ENCODE measurements at regions of chr14 and their contacts with region 1.

Region 1: DNA sequence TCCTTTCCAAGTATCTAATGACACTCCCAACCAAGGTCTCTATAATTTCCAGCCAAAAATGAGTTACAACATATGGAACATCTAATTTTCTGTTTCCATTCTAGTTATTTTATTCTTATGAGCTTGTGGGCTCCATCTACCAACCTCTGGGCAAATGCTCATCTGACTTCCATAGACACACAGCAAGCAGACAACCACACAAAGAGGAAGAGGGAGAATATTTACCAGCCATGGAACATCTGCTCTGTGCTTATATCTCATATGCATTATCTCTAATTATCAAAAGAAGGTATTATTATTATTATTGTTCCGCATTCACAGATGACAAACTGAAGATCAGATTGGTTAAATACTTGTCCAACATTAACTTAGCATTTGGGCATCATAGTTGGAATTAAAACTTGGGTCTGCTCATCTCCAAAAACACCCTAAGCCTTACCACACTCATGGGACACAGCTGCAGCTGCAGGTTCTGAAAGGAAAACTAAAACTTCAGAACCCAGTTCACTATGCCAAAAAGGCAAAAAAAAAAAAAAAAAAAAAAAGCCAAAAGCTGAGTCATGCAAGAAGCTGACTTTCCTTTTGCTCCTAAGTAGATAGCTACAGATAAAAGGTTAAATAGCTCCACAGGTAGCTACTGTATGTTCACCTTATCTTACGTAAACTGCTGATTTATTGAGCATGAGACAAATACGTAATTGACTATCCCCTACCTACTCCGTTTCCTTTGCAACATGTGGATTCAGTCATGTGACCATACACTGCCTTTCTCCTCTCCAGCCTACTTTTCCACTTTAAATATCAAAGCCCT is 23.6 kb upstream of the TCL1B start:
- DNase-seq: peak; percentile 74
- ATAC-seq: peak; percentile 68
- H3K4me3 ChIP-seq: peak overlapping the region; percentile 64
- H3K27ac ChIP-seq: peak overlapping the region; percentile 82
- H3K4me1 ChIP-seq: peaks cover 56% of the 10 kb centered on the region
- H3K27me3 ChIP-seq: no peaks in the 10 kb centered on the region; a peak in 2 of 4 replicates
- CTCF ChIP-seq: no peak
- EP300 ChIP-seq: 0 out of 4 replicates have a peak, but pooled peaks of 1 of the 2 experiments have one; percentile 19
- POLR2A ChIP-seq: no peak
- RAD21 ChIP-seq: no peak

Region 2: GRCh38 chr14:93959239-93960107 is 1703.1 kb before region 1 on chr14:
- CTCF ChIA-PET with region 1: no interaction called
- POLR2A ChIA-PET with region 1: no interaction called
- RAD21 ChIA-PET with region 1: no interaction called
- SMC1A ChIA-PET with region 1: no interaction called
- in situ Hi-C with region 1: loop called (anchors 25 kb)
- intact Hi-C with region 1: no loop called
- DNase-seq: peak; percentile 90
- ATAC-seq: peak; percentile 82
- H3K4me3 ChIP-seq: peak overlapping the region; percentile 11; the same call in 1 of the 2 replicates
- H3K27ac ChIP-seq: peak overlapping the region; percentile 90
- H3K4me1 ChIP-seq: peaks cover 95% of the 10 kb centered on the region
- H3K27me3 ChIP-seq: no peaks in the 10 kb centered on the region
- CTCF ChIP-seq: no peak
- EP300 ChIP-seq: peak; percentile 98 to 99
- POLR2A ChIP-seq: peak; percentile 91
- RAD21 ChIP-seq: no peak

Region 3: GRCh38 chr14:95577067-95577800 is 85.3 kb before region 1 on chr14:
- CTCF ChIA-PET with region 1: interaction called, 3 read pairs
- POLR2A ChIA-PET with region 1: no interaction called
- RAD21 ChIA-PET with region 1: interaction called, 3 read pairs
- SMC1A ChIA-PET with region 1: interaction called, 5 read pairs
- in situ Hi-C with region 1: no loop called
- intact Hi-C with region 1: loop called (anchors 1 kb)
- DNase-seq: peak; percentile 89
- ATAC-seq: peak; percentile 98
- H3K4me3 ChIP-seq: peak overlapping the region; percentile 46; the same call in 1 of the 2 replicates
- H3K27ac ChIP-seq: peak overlapping the region; percentile 54
- H3K4me1 ChIP-seq: peaks cover 27% of the 10 kb centered on the region
- H3K27me3 ChIP-seq: peaks cover 0 to 5% of the 10 kb centered on the region in 2 experiments; a peak in 3 of 4 replicates
- CTCF ChIP-seq: no peak
- EP300 ChIP-seq: peak; percentile 74 to 83
- POLR2A ChIP-seq: no peak
- RAD21 ChIP-seq: no peak

Region 4: DNA sequence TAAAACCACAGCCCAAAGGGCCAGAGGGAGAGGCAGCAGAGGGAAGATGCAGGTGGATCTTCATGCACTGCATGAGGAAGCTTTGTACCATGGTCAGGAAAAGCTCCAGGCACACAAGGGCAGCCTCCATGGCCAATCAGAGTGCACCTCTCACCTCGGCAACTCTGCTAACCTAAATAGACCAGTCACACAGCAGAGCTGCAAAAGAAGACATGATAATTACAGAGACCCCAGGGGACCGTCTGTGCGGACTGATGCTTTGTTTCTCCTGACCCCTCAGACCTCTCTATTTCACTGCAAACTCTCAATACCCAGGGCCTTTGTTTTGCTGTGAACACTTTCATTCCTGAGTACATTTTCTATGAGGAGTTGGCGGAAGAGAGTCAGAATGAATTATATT is 12.9 kb after region 1 on chr14:
- CTCF ChIA-PET with region 1: interaction called, 98 read pairs
- POLR2A ChIA-PET with region 1: interaction called, 4 read pairs
- RAD21 ChIA-PET with region 1: interaction called, 44 read pairs
- SMC1A ChIA-PET with region 1: interaction called, 78 read pairs
- in situ Hi-C with region 1: no loop called
- intact Hi-C with region 1: no loop called
- DNase-seq: no peak
- ATAC-seq: no peak
- H3K4me3 ChIP-seq: no peak overlapping the region
- H3K27ac ChIP-seq: no peak overlapping the region
- H3K4me1 ChIP-seq: peaks cover 8% of the 10 kb centered on the region
- H3K27me3 ChIP-seq: no peaks in the 10 kb centered on the region
- CTCF ChIP-seq: no peak
- EP300 ChIP-seq: no peak
- POLR2A ChIP-seq: no peak
- RAD21 ChIP-seq: no peak

Region 5: DNA sequence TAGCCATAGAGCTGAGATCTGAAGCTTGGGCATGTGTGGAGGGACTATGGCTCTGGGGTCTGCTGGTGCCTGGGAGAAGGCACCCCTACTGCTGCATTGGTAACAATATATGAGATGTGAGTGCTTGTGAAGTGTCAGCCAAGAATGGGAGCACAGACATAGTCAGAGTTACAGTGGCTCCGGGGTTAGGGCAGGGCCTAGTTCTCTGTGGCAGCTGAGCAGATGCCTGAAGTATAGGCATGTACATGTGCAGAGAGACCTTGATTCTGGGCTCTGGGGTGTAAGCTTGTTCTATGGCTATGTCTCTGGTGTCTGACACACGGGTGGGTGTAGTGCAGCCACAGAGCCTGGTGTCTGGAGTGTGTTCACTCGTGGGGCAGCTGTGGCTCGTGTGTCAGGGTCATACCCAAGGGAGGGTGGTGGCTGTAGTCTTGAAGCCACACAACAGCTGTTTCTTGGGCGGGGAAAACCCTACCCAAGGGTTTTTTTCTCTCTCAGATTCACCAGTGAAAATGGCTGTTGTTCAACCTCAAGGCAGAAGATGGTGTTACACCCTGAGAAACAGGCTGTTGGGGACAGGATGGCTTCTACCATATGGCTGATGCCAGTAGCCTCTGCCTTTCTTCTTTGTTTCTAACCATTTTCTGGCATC is 63.2 kb after region 1 on chr14:
- CTCF ChIA-PET with region 1: interaction called, 9 read pairs
- POLR2A ChIA-PET with region 1: interaction called, 4 read pairs
- RAD21 ChIA-PET with region 1: interaction called, 5 read pairs
- SMC1A ChIA-PET with region 1: interaction called, 4 read pairs
- in situ Hi-C with region 1: no loop called
- intact Hi-C with region 1: loop called (anchors 5 kb)
- DNase-seq: peak; percentile 72
- ATAC-seq: peak; percentile 86
- H3K4me3 ChIP-seq: no peak overlapping the region
- H3K27ac ChIP-seq: peak overlapping the region; percentile 57
- H3K4me1 ChIP-seq: peaks cover 45% of the 10 kb centered on the region
- H3K27me3 ChIP-seq: no peaks in the 10 kb centered on the region
- CTCF ChIP-seq: peak in 1 of 3 experiments; percentile 54; a peak in 2 of 6 replicates
- EP300 ChIP-seq: peak in 1 of 2 experiments; percentile 28; a peak in 1 of 4 replicates
- POLR2A ChIP-seq: peak; percentile 24; the same call in 1 of the 2 replicates
- RAD21 ChIP-seq: peak; percentile 45; the same call in 1 of the 2 replicates

Measured in GM12878 (cell line).